ENCODE measurements at regions of chr22 and their contacts with region 1.

Region 1: GRCh38 chr22:24433813-24434470 is 6.5 kb downstream of the ADORA2A start:
- DNase-seq: peak; percentile 68 to 94 (median 92)
- H3K4me3 ChIP-seq: no peak overlapping the region
- H3K27ac ChIP-seq: peak overlapping the region; percentile 16 to 74
- H3K4me1 ChIP-seq: peaks cover 14 to 60% (median 46%) of the 10 kb centered on the region in 4 experiments
- H3K27me3 ChIP-seq: no peaks in the 10 kb centered on the region

Region 2: GRCh38 chr22:24413736-24414385 is 20.1 kb before region 1 on chr22:
- CTCF ChIA-PET with region 1: no interaction called
- POLR2A ChIA-PET with region 1: no interaction called
- DNase-seq: no peak
- H3K4me3 ChIP-seq: no peak overlapping the region
- H3K27ac ChIP-seq: no peak overlapping the region
- H3K4me1 ChIP-seq: no peaks in the 10 kb centered on the region
- H3K27me3 ChIP-seq: no peaks in the 10 kb centered on the region

Region 3: DNA sequence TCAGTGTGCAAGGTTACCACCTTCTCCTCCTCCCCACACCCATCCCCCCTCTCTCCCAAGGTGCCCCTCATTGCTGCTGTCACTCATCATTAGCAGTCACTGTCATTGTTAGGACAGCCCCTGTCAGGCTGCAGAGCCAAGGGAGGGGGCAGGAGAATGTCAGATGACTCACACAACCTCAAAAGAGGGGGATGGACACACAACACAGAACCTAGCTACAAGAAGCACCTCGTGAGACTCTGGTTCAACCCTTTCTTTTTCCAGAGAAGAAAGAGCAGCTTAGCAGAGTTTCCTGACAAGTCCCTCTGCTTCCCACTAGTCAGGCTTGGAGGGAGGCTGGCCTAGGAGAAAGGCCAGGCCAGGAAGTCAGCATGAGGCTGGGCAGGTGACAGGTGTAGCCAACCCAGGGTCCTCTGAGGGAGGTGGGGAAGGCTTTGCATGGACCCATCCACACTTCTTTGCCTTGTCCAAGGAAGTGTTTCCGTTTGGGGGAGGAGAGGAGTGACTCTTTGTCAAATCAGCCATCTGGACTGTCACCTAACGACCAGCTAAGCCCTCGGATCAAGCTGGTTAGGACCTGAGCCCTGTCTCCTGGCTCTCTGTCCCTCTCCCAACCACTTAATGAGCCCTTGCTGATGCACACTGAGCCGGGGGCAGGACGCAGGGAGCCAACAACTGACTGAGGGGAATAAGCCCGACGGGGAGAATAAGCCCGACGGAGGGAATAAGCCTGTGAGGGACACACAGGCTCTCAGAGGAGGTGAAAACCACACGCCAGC is 11.7 kb after region 1 on chr22:
- CTCF ChIA-PET with region 1: interaction called, 10 read pairs
- POLR2A ChIA-PET with region 1: interaction called, 3 read pairs
- DNase-seq: no peak
- H3K4me3 ChIP-seq: no peak overlapping the region
- H3K27ac ChIP-seq: no peak overlapping the region
- H3K4me1 ChIP-seq: peaks cover 4 to 39% (median 21%) of the 10 kb centered on the region in 4 experiments
- H3K27me3 ChIP-seq: no peaks in the 10 kb centered on the region

Region 4: GRCh38 chr22:24497841-24498258 is 63.9 kb after region 1 on chr22:
- CTCF ChIA-PET with region 1: interaction called, 13 read pairs
- POLR2A ChIA-PET with region 1: no interaction called
- DNase-seq: peak in 2 of 3 donors; percentile 65 to 79
- H3K4me3 ChIP-seq: no peak overlapping the region
- H3K27ac ChIP-seq: no peak overlapping the region
- H3K4me1 ChIP-seq: peaks cover 8 to 36% (median 23%) of the 10 kb centered on the region in 4 experiments
- H3K27me3 ChIP-seq: peaks cover 0 to 29% (median 17%) of the 10 kb centered on the region in 5 experiments

Measured in common myeloid progenitor, CD34-positive (primary cell).